ENCODE measurements at regions of chr12 and their contacts with region 1.

Region 1: GRCh38 chr12:96352161-96352835 is 47.9 kb downstream of the CDK17 start:
- DNase-seq: no peak
- ATAC-seq: no peak
- H3K4me3 Mint-ChIP-seq: no peak overlapping the region
- H3K27ac Mint-ChIP-seq: peak overlapping the region; percentile 54
- H3K4me1 Mint-ChIP-seq: peaks cover 69% of the 10 kb centered on the region
- H3K27me3 Mint-ChIP-seq: no peaks in the 10 kb centered on the region
- CTCF ChIP-seq: no peak

Region 2: DNA sequence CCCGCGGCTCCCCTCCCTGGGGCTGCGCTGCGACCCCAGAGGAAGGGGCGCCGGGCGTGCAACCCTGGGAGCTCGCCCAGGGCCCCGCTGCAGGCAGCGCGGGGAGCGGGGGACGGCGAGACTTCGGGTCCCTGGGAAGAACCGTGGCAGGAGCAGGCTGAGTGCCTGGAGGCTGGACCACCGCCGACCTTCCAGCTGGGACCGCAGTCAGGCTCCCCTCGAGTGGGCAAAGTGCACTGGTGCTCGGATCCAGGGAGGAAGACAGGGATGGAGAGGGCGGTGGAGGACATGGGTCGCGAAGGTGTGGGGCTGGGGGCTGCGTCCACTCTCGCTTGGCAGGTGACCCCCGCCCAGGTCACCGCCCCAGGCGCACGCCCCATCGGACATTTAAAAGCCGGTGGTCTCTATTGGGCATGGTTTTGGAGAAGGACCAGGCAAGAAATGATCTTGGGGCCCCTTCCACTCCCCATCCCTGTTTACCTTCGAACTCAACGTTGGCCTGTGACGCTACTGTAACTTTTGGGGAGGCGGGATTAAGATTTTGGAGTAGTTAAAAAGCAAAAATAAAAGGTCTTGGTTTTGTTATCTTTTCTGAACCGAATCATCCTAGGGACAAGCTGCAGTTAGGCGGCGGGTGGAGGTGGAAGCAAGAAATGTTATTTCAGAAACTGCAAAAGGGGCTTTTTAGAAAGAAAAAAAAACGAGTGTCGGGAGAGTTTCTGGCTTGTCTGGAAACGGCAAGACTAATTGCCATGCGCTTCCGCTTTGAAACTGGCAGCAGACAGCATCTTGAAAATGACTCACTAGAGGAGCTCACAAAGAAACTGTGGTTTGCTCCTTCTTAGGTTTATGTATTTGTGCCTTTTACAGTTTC is 157.1 kb before region 1 on chr12:
- CTCF ChIA-PET with region 1: no interaction called
- POLR2A ChIA-PET with region 1: no interaction called
- intact Hi-C with region 1: no loop called
- DNase-seq: peak; percentile 45
- ATAC-seq: peak; percentile 57
- H3K4me3 Mint-ChIP-seq: peak overlapping the region; percentile 99
- H3K27ac Mint-ChIP-seq: peak overlapping the region; percentile 99
- H3K4me1 Mint-ChIP-seq: peaks cover 72% of the 10 kb centered on the region
- H3K27me3 Mint-ChIP-seq: no peaks in the 10 kb centered on the region
- CTCF ChIP-seq: no peak

Region 3: GRCh38 chr12:96335270-96335669 is 17.0 kb before region 1 on chr12:
- CTCF ChIA-PET with region 1: no interaction called
- POLR2A ChIA-PET with region 1: no interaction called
- intact Hi-C with region 1: loop called (anchors 2 kb)
- DNase-seq: no peak
- ATAC-seq: peak; percentile 28
- H3K4me3 Mint-ChIP-seq: no peak overlapping the region
- H3K27ac Mint-ChIP-seq: peak overlapping the region; percentile 3
- H3K4me1 Mint-ChIP-seq: peaks cover 14% of the 10 kb centered on the region
- H3K27me3 Mint-ChIP-seq: no peaks in the 10 kb centered on the region
- CTCF ChIP-seq: no peak